ENCODE measurements at regions of chr18 and their contacts with region 1.

Region 1: GRCh38 chr18:24176727-24177416 is 38.0 kb downstream of the CABYR start:
- DNase-seq: peak; percentile 85
- ATAC-seq: peak; percentile 91
- H3K4me3 Mint-ChIP-seq: no peak overlapping the region
- H3K27ac Mint-ChIP-seq: peak overlapping the region; percentile 74; the same call in 1 of the 2 replicates
- H3K4me1 Mint-ChIP-seq: peaks cover 15% of the 10 kb centered on the region
- H3K27me3 Mint-ChIP-seq: no peaks in the 10 kb centered on the region
- CTCF ChIP-seq: peak; percentile 78

Region 2: GRCh38 chr18:23890589-23890988 is 286.3 kb before region 1 on chr18:
- CTCF ChIA-PET with region 1: no interaction called
- POLR2A ChIA-PET with region 1: no interaction called
- DNase-seq: no peak
- ATAC-seq: no peak
- H3K4me3 Mint-ChIP-seq: no peak overlapping the region
- H3K27ac Mint-ChIP-seq: no peak overlapping the region
- H3K4me1 Mint-ChIP-seq: peaks cover 2% of the 10 kb centered on the region; the same call in 1 of the 2 replicates
- H3K27me3 Mint-ChIP-seq: no peaks in the 10 kb centered on the region; the same call in 1 of the 2 replicates
- CTCF ChIP-seq: no peak

Region 3: GRCh38 chr18:24153397-24153796 is 23.5 kb before region 1 on chr18:
- CTCF ChIA-PET with region 1: interaction called, 18 read pairs
- POLR2A ChIA-PET with region 1: no interaction called
- DNase-seq: no peak
- ATAC-seq: no peak
- H3K4me3 Mint-ChIP-seq: no peak overlapping the region
- H3K27ac Mint-ChIP-seq: no peak overlapping the region; the same call in 1 of the 2 replicates
- H3K4me1 Mint-ChIP-seq: peaks cover 9% of the 10 kb centered on the region
- H3K27me3 Mint-ChIP-seq: no peaks in the 10 kb centered on the region
- CTCF ChIP-seq: no peak

Region 4: DNA sequence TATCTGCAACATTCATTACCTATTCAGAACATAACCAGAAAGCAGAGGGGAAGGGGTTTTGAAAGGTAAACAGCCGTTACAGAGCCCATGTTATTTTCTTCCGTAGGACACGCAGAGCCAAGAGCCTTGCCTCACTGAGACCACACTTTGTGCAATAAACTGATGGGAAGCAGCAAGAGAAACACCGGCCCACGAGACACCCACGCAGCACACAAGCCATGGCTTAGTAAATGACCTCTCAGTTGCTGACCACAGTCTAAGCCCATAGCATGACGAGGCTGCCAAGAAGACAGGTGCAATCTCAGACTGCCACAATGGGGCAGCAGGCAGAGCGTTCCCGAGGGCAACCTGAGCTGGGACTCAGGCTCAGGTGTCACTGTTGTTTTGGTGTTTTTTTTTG is 21.6 kb after region 1 on chr18:
- CTCF ChIA-PET with region 1: interaction called, 13 read pairs
- POLR2A ChIA-PET with region 1: no interaction called
- DNase-seq: no peak
- ATAC-seq: no peak
- H3K4me3 Mint-ChIP-seq: no peak overlapping the region
- H3K27ac Mint-ChIP-seq: no peak overlapping the region
- H3K4me1 Mint-ChIP-seq: 0 out of 2 replicates have a peak, but pooled peaks cover 2% of the 10 kb centered on the region
- H3K27me3 Mint-ChIP-seq: no peaks in the 10 kb centered on the region
- CTCF ChIP-seq: no peak

Region 5: GRCh38 chr18:24262087-24262486 is 85.2 kb after region 1 on chr18:
- CTCF ChIA-PET with region 1: interaction called, 10 read pairs
- POLR2A ChIA-PET with region 1: no interaction called
- DNase-seq: no peak
- ATAC-seq: no peak
- H3K4me3 Mint-ChIP-seq: no peak overlapping the region
- H3K27ac Mint-ChIP-seq: no peak overlapping the region
- H3K4me1 Mint-ChIP-seq: peaks cover 32% of the 10 kb centered on the region
- H3K27me3 Mint-ChIP-seq: no peaks in the 10 kb centered on the region; the same call in 1 of the 2 replicates
- CTCF ChIP-seq: no peak

Region 6: GRCh38 chr18:24326211-24326610 is 149.3 kb after region 1 on chr18:
- CTCF ChIA-PET with region 1: interaction called, 10 read pairs
- POLR2A ChIA-PET with region 1: no interaction called
- DNase-seq: no peak
- ATAC-seq: no peak
- H3K4me3 Mint-ChIP-seq: no peak overlapping the region
- H3K27ac Mint-ChIP-seq: no peak overlapping the region
- H3K4me1 Mint-ChIP-seq: no peaks in the 10 kb centered on the region
- H3K27me3 Mint-ChIP-seq: no peaks in the 10 kb centered on the region
- CTCF ChIP-seq: no peak

Region 7: GRCh38 chr18:24362758-24363157 is 185.9 kb after region 1 on chr18:
- CTCF ChIA-PET with region 1: interaction called, 20 read pairs
- POLR2A ChIA-PET with region 1: interaction called, 4 read pairs
- DNase-seq: no peak
- ATAC-seq: peak; percentile 54
- H3K4me3 Mint-ChIP-seq: no peak overlapping the region
- H3K27ac Mint-ChIP-seq: peak overlapping the region; percentile 93
- H3K4me1 Mint-ChIP-seq: peaks cover 22% of the 10 kb centered on the region
- H3K27me3 Mint-ChIP-seq: no peaks in the 10 kb centered on the region
- CTCF ChIP-seq: no peak

Region 8: DNA sequence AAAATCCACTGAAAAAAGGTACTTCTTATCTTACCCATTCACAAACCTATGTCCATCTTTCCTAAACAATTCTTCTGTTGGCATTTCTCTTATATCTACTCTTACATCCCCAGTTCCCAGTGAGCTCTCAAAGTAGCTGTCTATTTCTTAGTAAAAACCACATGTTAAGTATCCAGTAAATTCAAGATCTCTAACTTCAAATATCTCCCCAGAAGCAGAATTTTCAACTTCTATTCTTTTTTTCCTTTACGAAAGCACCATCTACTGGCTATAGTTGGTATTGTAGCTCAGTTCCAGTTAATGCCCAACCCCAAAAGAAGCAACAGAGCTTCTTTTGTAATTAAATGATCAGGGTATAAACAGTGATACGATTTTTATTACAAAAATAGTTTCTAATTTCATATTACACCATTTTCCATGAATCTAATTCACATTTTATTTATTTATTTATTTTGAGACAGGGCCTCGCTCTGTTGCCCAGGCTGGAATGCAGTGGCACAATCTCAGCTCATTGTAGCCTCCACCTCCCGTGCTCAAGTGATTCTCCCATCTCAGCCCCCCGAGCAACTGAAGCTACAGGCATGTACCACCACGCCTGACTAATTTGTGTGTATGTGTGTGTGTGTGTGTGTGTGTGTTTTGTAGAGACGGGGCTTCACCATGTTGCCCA is 312.1 kb after region 1 on chr18:
- CTCF ChIA-PET with region 1: interaction called, 74 read pairs
- POLR2A ChIA-PET with region 1: no interaction called
- DNase-seq: no peak
- ATAC-seq: no peak
- H3K4me3 Mint-ChIP-seq: no peak overlapping the region
- H3K27ac Mint-ChIP-seq: no peak overlapping the region
- H3K4me1 Mint-ChIP-seq: peaks cover 2% of the 10 kb centered on the region; the same call in 1 of the 2 replicates
- H3K27me3 Mint-ChIP-seq: no peaks in the 10 kb centered on the region; the same call in 1 of the 2 replicates
- CTCF ChIP-seq: peak; percentile 77

Measured in WTC11 (cell line).